CD8-positive, alpha-beta T cell (primary cell): ENCODE measurements at regions of chr1 and their contacts with region 1.

Region 1: DNA sequence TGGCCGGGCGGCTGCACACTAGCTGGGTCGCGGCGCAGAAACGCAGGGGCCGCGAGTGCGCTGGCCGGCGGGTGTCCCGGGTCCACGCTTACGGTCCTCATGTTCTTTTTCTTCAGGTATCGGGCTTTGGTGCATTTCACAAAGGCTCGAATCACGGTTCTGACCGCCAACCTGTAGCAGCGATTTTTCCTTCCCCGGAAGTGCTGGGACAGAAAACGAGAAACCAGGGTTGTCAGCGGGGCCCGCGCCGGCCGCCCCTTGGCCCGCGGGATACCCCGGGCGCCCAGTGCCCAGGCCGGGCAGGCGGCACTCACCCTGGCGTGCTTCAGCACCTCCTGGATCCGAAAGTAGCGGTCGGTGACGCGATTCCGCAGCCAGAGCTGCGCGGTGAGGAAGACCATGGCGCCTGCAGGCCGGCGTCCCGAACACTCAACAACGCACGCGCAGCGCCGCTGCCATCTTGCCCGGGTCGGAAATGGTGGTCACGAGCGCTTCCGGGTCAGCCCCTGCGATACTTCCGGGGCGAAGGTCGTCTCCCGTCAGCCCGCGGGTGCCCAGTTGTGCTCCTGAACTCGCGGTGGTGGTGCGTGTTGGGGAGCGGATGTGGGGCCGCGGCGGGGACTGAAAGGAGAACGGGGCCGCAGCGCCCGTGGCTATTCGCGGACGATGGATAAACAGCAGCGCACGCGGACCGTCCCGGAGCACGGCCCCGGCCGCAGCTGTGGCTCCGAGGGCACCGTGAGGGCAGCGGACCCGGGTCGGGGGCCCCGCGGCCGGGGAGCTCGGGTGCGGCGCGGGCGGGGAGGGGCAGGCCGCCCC is at the start of gene MRPL20:
- DNase-seq: peak; percentile 89 to 98 (median 96)
- ATAC-seq: peak; percentile 95
- H3K4me3 ChIP-seq: peak within 1 kb of the TSS; percentile 79 to 87
- H3K4me3 Mint-ChIP-seq: peak within 1 kb of the TSS; percentile 94
- H3K27ac ChIP-seq: peak within 1 kb of the TSS; percentile 81 to 87
- H3K27ac Mint-ChIP-seq: peak within 1 kb of the TSS; percentile 96
- H3K4me1 ChIP-seq: peaks cover 20% of the 10 kb centered on the region
- H3K4me1 Mint-ChIP-seq: peaks cover 46% of the 10 kb centered on the region
- H3K27me3 ChIP-seq: no peaks in the 10 kb centered on the region
- H3K27me3 Mint-ChIP-seq: no peaks in the 10 kb centered on the region
- CTCF ChIP-seq: no peak
- total RNA-seq, gene MRPL20: 92.6 to 92.7 TPM

Region 2: GRCh38 chr1:1273512-1274298 is 133.3 kb before region 1 on chr1 and contains the start of gene UBE2J2:
- CTCF ChIA-PET with region 1: no interaction called
- POLR2A ChIA-PET with region 1: no interaction called
- intact Hi-C with region 1: loop called in 1 of 2 experiments (anchors 1 kb)
- DNase-seq: peak; percentile 86 to 96 (median 93)
- ATAC-seq: peak; percentile 95
- H3K4me3 ChIP-seq: peak within 1 kb of the TSS; percentile 69 to 91
- H3K4me3 Mint-ChIP-seq: peak within 1 kb of the TSS; percentile 88
- H3K27ac ChIP-seq: peak within 1 kb of the TSS; percentile 53 to 63
- H3K27ac Mint-ChIP-seq: peak within 1 kb of the TSS; percentile 89
- H3K4me1 ChIP-seq: peaks cover 39% of the 10 kb centered on the region
- H3K4me1 Mint-ChIP-seq: peaks cover 40% of the 10 kb centered on the region
- H3K27me3 ChIP-seq: no peaks in the 10 kb centered on the region
- H3K27me3 Mint-ChIP-seq: no peaks in the 10 kb centered on the region
- CTCF ChIP-seq: no peak
- total RNA-seq, gene UBE2J2: 46.4 to 50.7 TPM

Region 3: DNA sequence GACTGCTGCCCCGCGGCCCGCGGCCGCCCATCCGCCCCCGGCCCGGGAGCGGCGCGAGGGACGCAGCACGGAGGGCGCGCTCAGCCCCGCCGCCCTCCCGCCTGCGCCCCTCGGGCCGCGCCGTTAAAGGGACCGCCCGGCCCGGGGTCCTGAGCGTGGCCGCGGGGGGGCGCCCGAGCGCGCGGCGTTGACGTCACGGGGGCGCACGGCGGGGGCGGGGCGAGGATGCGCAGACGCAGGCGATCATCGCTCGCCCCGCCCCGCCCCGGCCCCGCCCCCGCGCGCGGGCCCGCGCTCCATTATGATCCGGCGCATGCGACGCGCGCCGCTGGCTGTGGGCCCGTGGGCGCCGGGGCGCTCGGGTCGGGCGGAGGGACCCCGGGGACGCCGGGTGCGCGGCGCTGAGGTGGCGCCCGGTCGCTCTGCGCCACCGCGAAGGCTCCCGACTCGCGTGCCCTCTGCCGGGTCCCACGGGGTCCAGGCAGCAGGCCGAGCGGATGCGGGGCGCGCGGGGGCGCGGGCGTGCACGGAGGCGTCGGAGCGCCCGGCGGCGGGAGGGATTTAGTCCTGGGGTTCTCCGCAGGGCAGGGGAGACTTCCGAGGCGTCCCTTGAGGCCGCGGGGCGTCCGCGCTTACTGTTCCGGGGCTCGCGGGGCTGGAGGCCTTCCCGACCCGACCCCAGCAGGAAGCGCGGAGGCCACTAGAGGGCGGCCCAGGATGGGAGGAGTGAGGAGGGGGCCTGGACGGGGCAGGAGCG is 57.6 kb before region 1 on chr1 and contains the start of gene DVL1:
- CTCF ChIA-PET with region 1: no interaction called
- POLR2A ChIA-PET with region 1: no interaction called
- intact Hi-C with region 1: loop called in 1 of 2 experiments (anchors 2 kb)
- DNase-seq: peak; percentile 50 to 86 (median 72)
- ATAC-seq: peak; percentile 84
- H3K4me3 ChIP-seq: peak within 1 kb of the TSS; percentile 57 to 63
- H3K4me3 Mint-ChIP-seq: peak within 1 kb of the TSS; percentile 76
- H3K27ac ChIP-seq: peak within 1 kb of the TSS; percentile 46 to 72
- H3K27ac Mint-ChIP-seq: peak within 1 kb of the TSS; percentile 41
- H3K4me1 ChIP-seq: peaks cover 27% of the 10 kb centered on the region
- H3K4me1 Mint-ChIP-seq: peaks cover 29% of the 10 kb centered on the region
- H3K27me3 ChIP-seq: peaks cover 0 to 16% of the 10 kb centered on the region in 2 experiments
- H3K27me3 Mint-ChIP-seq: peaks cover 8% of the 10 kb centered on the region
- CTCF ChIP-seq: peak; percentile 43
- total RNA-seq, gene DVL1: 44.5 to 45.5 TPM

Region 4: GRCh38 chr1:1441002-1441888 is 34.2 kb after region 1 on chr1:
- CTCF ChIA-PET with region 1: no interaction called
- POLR2A ChIA-PET with region 1: no interaction called
- intact Hi-C with region 1: no loop called
- DNase-seq: peak; percentile 22 to 74 (median 59)
- ATAC-seq: peak; percentile 94
- H3K4me3 ChIP-seq: no peak overlapping the region
- H3K4me3 Mint-ChIP-seq: no peak overlapping the region
- H3K27ac ChIP-seq: no peak overlapping the region
- H3K27ac Mint-ChIP-seq: no peak overlapping the region
- H3K4me1 ChIP-seq: peaks cover 9% of the 10 kb centered on the region
- H3K4me1 Mint-ChIP-seq: peaks cover 5% of the 10 kb centered on the region
- H3K27me3 ChIP-seq: peaks cover 12 to 16% of the 10 kb centered on the region in 2 experiments
- H3K27me3 Mint-ChIP-seq: peaks cover 10% of the 10 kb centered on the region
- CTCF ChIP-seq: peak; percentile 85

Region 5: DNA sequence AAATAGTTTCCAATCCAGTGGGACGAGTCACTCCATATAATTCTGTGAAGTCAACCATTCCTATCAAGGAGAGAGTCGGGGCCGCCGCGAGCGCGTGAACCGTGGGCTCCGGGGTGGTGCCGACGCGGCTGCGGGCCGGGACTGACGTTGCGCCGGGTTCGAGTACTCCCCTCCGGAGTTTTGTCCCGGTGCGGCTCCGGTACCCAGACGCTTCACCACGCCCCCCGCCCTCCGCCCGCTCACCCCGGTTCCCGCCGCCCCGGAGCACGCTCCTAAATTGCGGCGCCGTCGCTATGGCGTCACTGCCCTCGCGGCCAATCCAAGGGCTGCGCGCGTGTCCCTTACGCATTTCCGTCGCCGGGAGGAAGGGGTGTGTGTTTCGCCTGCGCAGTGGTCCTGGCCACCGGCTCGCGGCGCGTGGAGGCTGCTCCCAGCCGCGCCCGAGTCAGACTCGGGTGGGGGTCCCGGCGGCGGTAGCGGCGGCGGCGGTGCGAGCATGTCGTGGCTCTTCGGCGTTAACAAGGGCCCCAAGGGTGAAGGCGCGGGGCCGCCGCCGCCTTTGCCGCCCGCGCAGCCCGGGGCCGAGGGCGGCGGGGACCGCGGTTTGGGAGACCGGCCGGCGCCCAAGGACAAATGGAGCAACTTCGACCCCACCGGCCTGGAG is 64.5 kb after region 1 on chr1 and contains the start of gene ATAD3B:
- CTCF ChIA-PET with region 1: no interaction called
- POLR2A ChIA-PET with region 1: no interaction called
- intact Hi-C with region 1: loop called in 1 of 2 experiments (anchors 1 kb)
- DNase-seq: peak; percentile 75 to 95 (median 90)
- ATAC-seq: peak; percentile 93
- H3K4me3 ChIP-seq: peak within 1 kb of the TSS; percentile 62 to 86
- H3K4me3 Mint-ChIP-seq: peak within 1 kb of the TSS; percentile 92
- H3K27ac ChIP-seq: peak within 1 kb of the TSS; percentile 81 to 89
- H3K27ac Mint-ChIP-seq: peak within 1 kb of the TSS; percentile 94
- H3K4me1 ChIP-seq: peaks cover 24% of the 10 kb centered on the region
- H3K4me1 Mint-ChIP-seq: peaks cover 24% of the 10 kb centered on the region
- H3K27me3 ChIP-seq: no peaks in the 10 kb centered on the region
- H3K27me3 Mint-ChIP-seq: no peaks in the 10 kb centered on the region
- CTCF ChIP-seq: no peak
- total RNA-seq, gene ATAD3B: 55.4 to 69.6 TPM

Region 6: GRCh38 chr1:1511533-1512285 is 104.7 kb after region 1 on chr1 and contains the start of gene ATAD3A:
- CTCF ChIA-PET with region 1: no interaction called
- POLR2A ChIA-PET with region 1: no interaction called
- intact Hi-C with region 1: loop called in 1 of 2 experiments (anchors 2 kb)
- DNase-seq: peak; percentile 83 to 98 (median 95)
- ATAC-seq: peak; percentile 94
- H3K4me3 ChIP-seq: peak within 1 kb of the TSS; percentile 81 to 99
- H3K4me3 Mint-ChIP-seq: peak within 1 kb of the TSS; percentile 88
- H3K27ac ChIP-seq: peak within 1 kb of the TSS; percentile 90 to 97
- H3K27ac Mint-ChIP-seq: peak within 1 kb of the TSS; percentile 94
- H3K4me1 ChIP-seq: peaks cover 6% of the 10 kb centered on the region
- H3K4me1 Mint-ChIP-seq: peaks cover 11% of the 10 kb centered on the region
- H3K27me3 ChIP-seq: no peaks in the 10 kb centered on the region
- H3K27me3 Mint-ChIP-seq: no peaks in the 10 kb centered on the region
- CTCF ChIP-seq: no peak
- total RNA-seq, gene ATAD3A: 27.0 to 29.6 TPM